Activated CD4-positive, alpha-beta memory T cell treated with anti-CD3 and anti-CD28 coated beads, Interleukin-2, amount 10 ng/mL, durations not matched to agents 7 days and 5 days (primary cell): ENCODE measurements at regions of chr10 and their contacts with region 1.

Region 1: DNA sequence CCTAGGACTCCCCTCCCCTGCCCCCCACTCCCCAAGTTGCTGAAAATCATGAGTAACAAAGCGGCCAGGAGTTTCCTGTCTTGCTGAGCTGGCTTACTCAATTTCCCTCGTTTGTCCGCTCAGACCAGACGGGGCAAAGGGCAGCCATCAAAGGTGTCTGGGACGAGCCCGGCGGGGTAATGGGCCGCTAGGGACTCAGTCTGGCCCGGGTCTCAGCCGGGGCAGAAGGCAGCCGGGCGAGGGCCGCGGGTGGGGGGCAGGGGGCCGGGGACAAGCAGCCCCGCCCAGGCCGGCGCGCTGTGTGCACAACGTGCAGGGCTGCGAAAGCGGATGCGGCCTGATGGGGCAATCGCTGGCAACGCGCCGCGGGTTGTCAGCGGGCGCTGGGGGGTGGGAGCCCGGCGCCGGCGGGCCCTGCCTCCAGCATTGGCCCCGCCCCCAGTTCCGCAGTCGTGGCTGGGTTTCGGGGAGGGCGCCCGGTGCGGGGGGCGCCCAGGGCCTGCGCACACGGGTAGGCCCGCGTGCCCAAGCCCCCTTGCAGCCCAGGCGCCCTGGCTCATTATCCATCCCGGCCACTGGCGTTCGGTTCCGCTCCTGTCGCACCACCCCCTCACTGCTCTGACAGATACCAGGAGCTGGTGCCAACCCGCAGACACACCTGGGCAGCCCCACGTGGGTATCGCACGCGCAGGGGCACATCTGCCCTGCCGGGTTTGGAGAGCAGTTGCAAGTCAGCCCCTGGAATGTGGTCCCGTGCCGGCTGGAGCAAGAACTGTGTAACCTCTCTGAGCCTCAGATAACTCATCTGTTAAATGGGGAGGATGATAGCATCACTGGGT is 35.1 kb downstream of the DNAJB12 start:
- DNase-seq: peak; percentile 92
- H3K4me3 Mint-ChIP-seq: peak overlapping the region; percentile 76
- H3K27ac Mint-ChIP-seq: peak overlapping the region; percentile 98
- H3K4me1 Mint-ChIP-seq: peaks cover 81% of the 10 kb centered on the region
- H3K27me3 Mint-ChIP-seq: no peaks in the 10 kb centered on the region

Region 2: DNA sequence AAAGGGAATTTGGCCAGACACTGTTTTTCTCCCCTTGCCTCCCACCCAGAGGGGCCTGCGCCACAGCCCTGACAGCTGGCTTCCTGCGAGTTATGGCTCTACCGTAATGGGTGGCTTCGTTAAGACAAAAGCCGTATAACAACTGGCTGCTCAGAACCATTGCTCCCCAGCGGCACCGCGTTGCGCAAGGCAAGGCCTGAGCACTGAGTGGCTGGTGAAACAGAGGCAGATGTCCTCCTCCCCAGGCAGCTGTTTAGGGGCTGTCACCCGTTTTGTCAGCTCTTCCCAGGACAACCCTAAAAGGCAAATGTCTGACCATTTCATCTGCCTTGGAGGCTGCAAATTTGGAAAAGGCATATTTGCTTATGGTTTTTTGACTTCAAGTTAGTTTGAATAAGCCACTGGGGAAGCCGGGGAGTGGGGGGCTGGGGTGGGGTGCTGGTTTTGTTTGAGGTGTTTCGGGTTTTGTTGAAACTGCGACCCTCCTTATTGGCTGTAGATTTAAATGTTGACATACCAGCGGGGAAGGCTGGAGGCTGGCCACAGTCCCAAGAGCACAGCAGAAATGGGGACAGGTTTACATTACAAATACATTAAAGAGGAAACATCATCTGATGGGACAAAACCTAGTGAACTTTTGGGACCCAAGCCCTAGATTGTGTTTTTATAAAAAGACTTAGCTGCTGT is 230.6 kb before region 1 on chr10:
- CTCF ChIA-PET with region 1: no interaction called
- POLR2A ChIA-PET with region 1: interaction called, 31 read pairs
- DNase-seq: peak; percentile 68
- H3K4me3 Mint-ChIP-seq: peak overlapping the region; percentile 100
- H3K27ac Mint-ChIP-seq: peak overlapping the region; percentile 100
- H3K4me1 Mint-ChIP-seq: peaks cover 54% of the 10 kb centered on the region
- H3K27me3 Mint-ChIP-seq: no peaks in the 10 kb centered on the region

Region 3: GRCh38 chr10:72248468-72249151 is 71.0 kb before region 1 on chr10:
- CTCF ChIA-PET with region 1: interaction called, 5 read pairs
- POLR2A ChIA-PET with region 1: interaction called, 46 read pairs
- DNase-seq: peak; percentile 86
- H3K4me3 Mint-ChIP-seq: peak overlapping the region; percentile 73
- H3K27ac Mint-ChIP-seq: peak overlapping the region; percentile 96
- H3K4me1 Mint-ChIP-seq: peaks cover 78% of the 10 kb centered on the region
- H3K27me3 Mint-ChIP-seq: no peaks in the 10 kb centered on the region

Region 4: DNA sequence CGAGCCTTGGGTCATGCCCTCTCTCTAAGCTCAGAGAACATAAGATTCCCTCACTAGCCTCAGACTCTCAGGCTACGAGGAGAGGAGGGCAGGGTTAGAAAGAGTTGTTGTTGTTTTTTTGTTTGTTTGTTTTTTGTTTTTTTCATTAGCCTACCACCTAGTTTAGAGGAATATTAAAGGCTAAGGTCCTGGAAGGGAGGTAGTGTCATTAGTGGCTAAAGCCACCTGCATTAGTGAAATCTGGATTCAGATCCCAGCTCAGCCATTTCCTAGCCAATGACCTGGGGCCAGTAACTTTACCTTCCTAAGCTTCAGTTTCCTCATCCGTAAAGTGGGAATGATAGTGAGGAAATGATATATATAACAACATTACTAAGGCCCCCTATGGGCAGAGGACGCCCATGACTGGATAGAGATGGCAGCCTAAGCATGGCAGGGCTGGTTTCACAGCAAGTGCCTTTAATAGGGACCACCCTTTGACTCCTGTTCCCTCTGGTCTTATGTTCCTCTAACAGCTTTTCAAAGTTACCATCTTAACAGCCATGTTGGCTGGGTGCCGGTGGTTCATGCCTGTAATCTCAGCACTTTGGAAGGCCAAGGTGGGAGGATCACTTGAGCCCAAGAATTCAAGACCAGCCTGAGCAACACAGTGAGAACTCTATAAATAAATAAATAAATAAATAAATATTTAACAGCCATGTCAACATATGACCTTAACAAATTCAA is 40.8 kb before region 1 on chr10:
- CTCF ChIA-PET with region 1: interaction called, 32 read pairs
- POLR2A ChIA-PET with region 1: interaction called, 104 read pairs
- DNase-seq: no peak
- H3K4me3 Mint-ChIP-seq: peak overlapping the region; percentile 3
- H3K27ac Mint-ChIP-seq: no peak overlapping the region
- H3K4me1 Mint-ChIP-seq: peaks cover 47% of the 10 kb centered on the region
- H3K27me3 Mint-ChIP-seq: no peaks in the 10 kb centered on the region

Region 5: GRCh38 chr10:72297968-72298773 is 21.5 kb before region 1 on chr10:
- CTCF ChIA-PET with region 1: interaction called, 17 read pairs
- POLR2A ChIA-PET with region 1: interaction called, 448 read pairs
- DNase-seq: peak; percentile 96
- H3K4me3 Mint-ChIP-seq: peak overlapping the region; percentile 73
- H3K27ac Mint-ChIP-seq: peak overlapping the region; percentile 97
- H3K4me1 Mint-ChIP-seq: peaks cover 66% of the 10 kb centered on the region
- H3K27me3 Mint-ChIP-seq: no peaks in the 10 kb centered on the region